ENCODE measurements at regions of chr9 and their contacts with region 1.

Region 1: GRCh38 chr9:33623658-33624586 is 99.9 kb downstream of the ANKRD18B start:
- DNase-seq: peak; percentile 63 to 77 (median 75)
- H3K4me3 ChIP-seq: no peak overlapping the region
- H3K4me3 Mint-ChIP-seq: no peak overlapping the region
- H3K27ac ChIP-seq: no peak overlapping the region
- H3K27ac Mint-ChIP-seq: no peak overlapping the region
- H3K4me1 ChIP-seq: no peaks in the 10 kb centered on the region
- H3K4me1 Mint-ChIP-seq: peaks cover 4 to 8% (median 5%) of the 10 kb centered on the region in 4 donors
- H3K27me3 ChIP-seq: no peaks in the 10 kb centered on the region
- H3K27me3 Mint-ChIP-seq: peaks cover 18 to 35% of the 10 kb centered on the region in 2 donors

Region 2: DNA sequence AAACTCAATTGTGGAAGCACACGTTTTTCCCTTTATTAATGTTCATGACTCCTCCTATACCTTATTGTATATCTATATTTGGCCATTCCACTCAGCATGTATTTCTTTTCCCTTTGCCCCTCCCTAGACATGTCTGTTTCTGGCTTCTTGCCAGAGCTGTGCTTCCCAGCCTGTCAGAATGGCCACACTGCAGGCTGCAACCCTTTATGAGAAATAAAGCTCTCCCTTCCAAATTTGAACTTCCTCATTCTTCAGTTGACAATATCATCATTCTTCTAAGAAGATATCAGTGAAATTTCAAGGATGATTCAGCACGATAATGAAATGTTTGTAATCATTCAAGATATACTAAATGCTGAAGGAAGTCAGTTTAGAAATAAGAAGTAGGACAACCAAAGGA is 63.9 kb after region 1 on chr9:
- CTCF ChIA-PET with region 1: no interaction called
- POLR2A ChIA-PET with region 1: no interaction called
- intact Hi-C with region 1: no loop called
- DNase-seq: no peak
- H3K4me3 ChIP-seq: no peak overlapping the region
- H3K4me3 Mint-ChIP-seq: no peak overlapping the region
- H3K27ac ChIP-seq: no peak overlapping the region
- H3K27ac Mint-ChIP-seq: no peak overlapping the region
- H3K4me1 ChIP-seq: no peaks in the 10 kb centered on the region
- H3K4me1 Mint-ChIP-seq: peaks cover 0 to 7% (median 0%) of the 10 kb centered on the region in 4 donors
- H3K27me3 ChIP-seq: no peaks in the 10 kb centered on the region
- H3K27me3 Mint-ChIP-seq: peaks cover 28 to 33% of the 10 kb centered on the region in 2 donors

Region 3: GRCh38 chr9:33721674-33722358 is 97.9 kb after region 1 on chr9:
- CTCF ChIA-PET with region 1: interaction called, 224 read pairs
- POLR2A ChIA-PET with region 1: interaction called, 3 read pairs
- intact Hi-C with region 1: loop called (anchors 1 kb)
- DNase-seq: peak; percentile 79 to 85 (median 84)
- H3K4me3 ChIP-seq: no peak overlapping the region
- H3K4me3 Mint-ChIP-seq: peak overlapping the region in 1 of 8 donors; percentile 27
- H3K27ac ChIP-seq: no peak overlapping the region
- H3K27ac Mint-ChIP-seq: peak overlapping the region in 1 of 7 donors; percentile 63
- H3K4me1 ChIP-seq: no peaks in the 10 kb centered on the region
- H3K4me1 Mint-ChIP-seq: peaks cover 0 to 11% (median under 1%) of the 10 kb centered on the region in 4 donors
- H3K27me3 ChIP-seq: no peaks in the 10 kb centered on the region
- H3K27me3 Mint-ChIP-seq: peaks cover 6 to 7% of the 10 kb centered on the region in 2 donors

Region 4: DNA sequence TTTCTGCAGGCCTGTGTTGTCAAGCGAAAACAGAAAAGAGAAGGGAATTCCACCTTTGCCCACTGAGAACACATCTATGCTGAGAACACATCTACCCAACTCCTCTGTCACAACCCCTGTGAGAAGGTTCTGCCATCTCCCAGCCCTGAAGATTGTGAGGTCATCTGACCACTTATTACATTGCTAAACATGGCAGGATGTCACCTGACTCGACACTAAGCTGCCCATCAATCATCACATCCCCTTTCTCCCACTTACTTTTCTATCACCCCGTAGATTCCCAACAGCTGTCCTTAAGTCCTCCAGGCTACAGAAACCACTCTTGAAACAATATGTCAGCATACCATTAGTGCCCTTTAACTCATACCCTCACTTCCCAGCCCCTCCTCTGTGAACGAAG is 107.2 kb after region 1 on chr9:
- CTCF ChIA-PET with region 1: interaction called, 10 read pairs
- POLR2A ChIA-PET with region 1: no interaction called
- intact Hi-C with region 1: no loop called
- DNase-seq: no peak
- H3K4me3 ChIP-seq: no peak overlapping the region
- H3K4me3 Mint-ChIP-seq: no peak overlapping the region
- H3K27ac ChIP-seq: no peak overlapping the region
- H3K27ac Mint-ChIP-seq: no peak overlapping the region
- H3K4me1 ChIP-seq: no peaks in the 10 kb centered on the region
- H3K4me1 Mint-ChIP-seq: no peaks in the 10 kb centered on the region
- H3K27me3 ChIP-seq: no peaks in the 10 kb centered on the region
- H3K27me3 Mint-ChIP-seq: peaks cover 14 to 35% of the 10 kb centered on the region in 2 donors

Region 5: DNA sequence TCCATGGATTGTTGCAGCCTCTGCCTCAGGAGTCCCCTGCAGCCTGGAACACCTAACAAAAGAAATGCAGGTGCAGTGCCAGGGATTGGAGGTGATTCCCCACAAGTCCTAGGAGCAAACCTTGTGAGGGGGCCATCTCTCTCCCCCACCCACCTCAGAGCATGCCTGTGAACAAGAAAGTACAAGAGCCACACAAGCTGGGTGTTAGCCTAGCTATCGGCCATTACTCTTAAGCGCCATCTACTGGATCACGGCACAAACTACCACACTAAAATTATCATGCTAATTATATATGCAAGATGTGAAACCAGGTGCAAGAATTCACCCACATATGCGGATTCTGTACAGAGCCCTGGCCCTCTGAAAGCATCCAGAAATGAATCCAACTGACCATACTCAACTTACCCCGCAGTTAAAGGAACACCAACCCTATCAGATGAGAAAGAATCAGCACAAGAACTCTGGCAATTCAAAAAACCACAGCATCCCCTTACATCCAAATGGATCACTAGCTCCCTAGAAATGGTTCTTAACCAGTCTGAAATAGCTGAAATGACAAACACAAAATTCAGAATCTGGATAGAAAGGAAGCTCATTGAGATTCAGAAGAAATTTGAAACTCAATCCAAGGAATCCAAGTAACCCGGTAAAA is 154.9 kb after region 1 on chr9:
- CTCF ChIA-PET with region 1: interaction called, 20 read pairs
- POLR2A ChIA-PET with region 1: no interaction called
- intact Hi-C with region 1: loop called (anchors 1 kb)
- DNase-seq: peak; percentile 47 to 61 (median 53)
- H3K4me3 ChIP-seq: no peak overlapping the region
- H3K4me3 Mint-ChIP-seq: no peak overlapping the region
- H3K27ac ChIP-seq: no peak overlapping the region
- H3K27ac Mint-ChIP-seq: no peak overlapping the region
- H3K4me1 ChIP-seq: no peaks in the 10 kb centered on the region
- H3K4me1 Mint-ChIP-seq: peaks cover 0 to 5% (median under 1%) of the 10 kb centered on the region in 4 donors
- H3K27me3 ChIP-seq: no peaks in the 10 kb centered on the region
- H3K27me3 Mint-ChIP-seq: peaks cover 6 to 10% of the 10 kb centered on the region in 2 donors

Region 6: DNA sequence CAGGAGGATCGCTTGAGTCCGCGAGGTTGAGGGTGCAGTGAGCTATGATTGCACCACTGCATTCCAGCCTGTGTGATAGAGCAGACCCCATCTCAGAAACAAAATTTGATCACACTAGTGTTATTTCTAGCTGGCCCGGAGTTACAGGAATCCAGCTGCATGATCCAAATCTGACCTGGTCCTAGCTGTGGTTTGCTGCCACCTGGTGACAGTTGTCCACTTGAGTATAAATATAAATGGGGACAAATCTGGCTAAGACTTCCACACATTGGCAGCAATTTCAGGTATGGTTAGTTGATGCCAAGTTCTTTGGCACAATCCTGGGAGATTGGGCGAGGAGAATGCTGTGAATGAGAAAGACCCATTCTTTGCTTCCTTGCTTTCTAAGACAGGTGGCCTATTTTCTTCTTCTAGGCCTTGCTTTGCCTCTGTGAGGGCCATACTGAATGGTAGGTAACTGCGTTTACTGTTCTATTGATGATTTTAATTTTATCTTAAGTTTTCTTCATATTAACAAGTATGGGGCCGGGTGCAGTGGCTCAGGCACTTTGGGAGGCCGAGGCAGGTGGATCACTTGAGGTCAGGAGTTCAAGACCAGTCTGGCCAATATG is 228.4 kb after region 1 on chr9:
- CTCF ChIA-PET with region 1: no interaction called
- POLR2A ChIA-PET with region 1: no interaction called
- intact Hi-C with region 1: loop called (anchors 1 kb)
- DNase-seq: peak; percentile 46 to 54 (median 51)
- H3K4me3 ChIP-seq: no peak overlapping the region
- H3K4me3 Mint-ChIP-seq: no peak overlapping the region
- H3K27ac ChIP-seq: no peak overlapping the region
- H3K27ac Mint-ChIP-seq: peak overlapping the region in 3 of 7 donors; percentile 46 to 75 (median 67)
- H3K4me1 ChIP-seq: peaks cover 37% of the 10 kb centered on the region
- H3K4me1 Mint-ChIP-seq: peaks cover 23 to 58% (median 41%) of the 10 kb centered on the region in 4 donors
- H3K27me3 ChIP-seq: no peaks in the 10 kb centered on the region
- H3K27me3 Mint-ChIP-seq: no peaks in the 10 kb centered on the region